ENCODE measurements at regions of chr2 and their contacts with region 1.

Region 1: DNA sequence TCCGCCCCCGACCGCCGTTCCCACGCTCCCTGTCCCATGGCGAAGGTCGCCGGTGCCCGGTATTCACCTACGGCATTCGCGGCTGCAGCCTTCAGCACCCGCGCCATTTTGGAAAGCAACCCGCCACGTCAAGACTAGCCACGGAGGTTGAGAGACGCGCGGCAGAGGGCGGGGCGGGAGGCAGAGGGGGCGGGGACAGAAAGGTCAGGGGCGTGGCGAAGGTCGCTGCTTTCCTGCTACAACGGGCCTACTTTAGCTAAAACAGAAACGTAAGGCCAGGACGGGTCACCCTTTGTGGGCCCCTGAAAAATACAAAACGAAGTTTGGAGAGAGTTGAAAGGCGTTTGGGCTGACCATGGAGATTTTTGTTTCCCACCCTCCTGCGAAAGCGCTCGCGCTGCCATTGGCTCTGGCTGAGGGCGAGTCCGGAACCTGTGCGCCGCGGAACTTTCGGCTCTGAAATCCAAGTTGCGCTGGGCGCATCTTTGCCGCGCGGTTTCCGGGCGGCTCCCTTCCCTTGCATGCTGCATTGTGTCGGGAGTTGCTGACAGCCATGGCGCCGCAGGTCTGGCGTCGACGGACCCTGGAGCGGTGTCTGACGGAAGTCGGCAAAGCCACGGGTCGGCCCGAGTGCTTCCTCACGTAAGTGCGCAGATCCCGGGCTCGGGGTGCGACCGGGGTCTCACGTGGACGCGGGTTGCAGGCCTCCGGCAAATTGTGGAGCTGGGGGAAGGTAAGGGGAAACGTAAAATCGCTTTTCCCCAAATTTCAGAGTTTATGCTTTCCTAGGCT is at the starts of genes MCEE and MPHOSPH10:
- DNase-seq: peak; percentile 95
- ATAC-seq: peak; percentile 95
- H3K4me3 Mint-ChIP-seq: no peak within 1 kb of the TSS
- H3K27ac Mint-ChIP-seq: no peak within 1 kb of the TSS
- H3K4me1 Mint-ChIP-seq: peaks cover 18% of the 10 kb centered on the region
- H3K27me3 Mint-ChIP-seq: no peaks in the 10 kb centered on the region
- total RNA-seq, gene MCEE: 10.2 to 13.6 TPM
- total RNA-seq, gene MPHOSPH10: 48.5 to 61.9 TPM

Region 2: DNA sequence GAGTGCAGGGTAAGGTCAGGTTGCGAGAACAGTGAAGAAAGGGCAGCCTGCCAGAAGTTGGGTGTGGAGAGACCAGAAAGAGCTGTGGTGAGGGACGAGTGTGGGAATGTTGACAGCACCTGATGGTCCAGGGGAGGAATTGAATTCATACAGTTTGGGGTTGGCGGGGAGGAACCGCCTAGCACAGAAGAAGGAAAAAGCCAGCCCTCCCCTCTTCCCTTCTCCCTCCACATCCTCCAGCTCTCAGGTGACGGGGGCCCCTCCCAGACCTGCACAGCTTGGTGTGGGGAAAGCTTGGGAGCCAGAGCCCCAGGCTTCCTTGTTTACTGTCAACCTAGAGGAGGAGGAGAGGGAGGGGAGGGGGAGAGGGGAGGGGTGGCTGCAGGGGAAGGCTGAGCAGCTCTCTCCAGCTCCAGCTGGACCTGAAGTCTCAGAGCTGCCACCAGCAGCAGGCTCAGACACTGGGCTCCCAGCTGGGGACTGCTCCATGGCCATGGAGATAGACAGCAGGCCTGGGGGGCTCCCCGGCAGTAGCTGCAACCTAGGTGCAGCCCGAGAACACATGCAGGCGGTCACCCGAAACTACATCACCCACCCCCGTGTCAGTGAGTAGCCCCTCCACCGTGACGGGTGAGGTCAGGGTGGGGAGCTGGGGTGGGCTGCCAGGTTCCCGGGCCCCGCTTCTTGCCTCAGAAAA is 194.7 kb before region 1 on chr2 and contains the start of gene ATP6V1B1:
- CTCF ChIA-PET with region 1: no interaction called
- POLR2A ChIA-PET with region 1: no interaction called
- intact Hi-C with region 1: no loop called
- DNase-seq: no peak
- ATAC-seq: no peak
- H3K4me3 Mint-ChIP-seq: no peak within 1 kb of the TSS
- H3K27ac Mint-ChIP-seq: no peak within 1 kb of the TSS
- H3K4me1 Mint-ChIP-seq: no peaks in the 10 kb centered on the region
- H3K27me3 Mint-ChIP-seq: peaks cover 11% of the 10 kb centered on the region
- total RNA-seq, gene ATP6V1B1: not detected

Region 3: DNA sequence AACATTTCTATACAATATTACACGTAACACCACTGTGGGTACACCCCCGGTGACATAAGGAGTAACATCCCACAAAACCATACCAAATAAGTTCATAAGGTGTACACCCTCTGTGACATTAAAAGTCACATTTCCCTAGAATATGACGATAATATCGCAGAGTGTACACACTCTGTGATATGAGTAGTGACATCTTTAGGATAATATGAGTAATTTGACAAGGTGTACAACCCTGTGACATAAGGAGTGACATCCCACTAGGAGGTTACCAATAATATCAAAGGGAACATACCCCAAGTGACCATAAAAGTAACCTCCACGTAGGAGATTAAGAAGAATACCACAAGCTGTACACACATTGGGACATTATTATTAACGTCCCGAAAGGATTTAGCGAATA is 111.7 kb before region 1 on chr2:
- CTCF ChIA-PET with region 1: no interaction called
- POLR2A ChIA-PET with region 1: no interaction called
- intact Hi-C with region 1: loop called in 1 of 2 experiments (anchors 2 kb)
- DNase-seq: no peak
- ATAC-seq: peak; percentile 47
- H3K4me3 Mint-ChIP-seq: no peak overlapping the region
- H3K27ac Mint-ChIP-seq: no peak overlapping the region
- H3K4me1 Mint-ChIP-seq: peaks cover 7% of the 10 kb centered on the region
- H3K27me3 Mint-ChIP-seq: peaks cover 2% of the 10 kb centered on the region

Region 4: GRCh38 chr2:71049365-71050360 is 80.6 kb before region 1 on chr2:
- CTCF ChIA-PET with region 1: no interaction called
- POLR2A ChIA-PET with region 1: no interaction called
- intact Hi-C with region 1: loop called in 1 of 2 experiments (anchors 1 kb)
- DNase-seq: peak; percentile 82
- ATAC-seq: peak; percentile 81
- H3K4me3 Mint-ChIP-seq: no peak overlapping the region
- H3K27ac Mint-ChIP-seq: peak overlapping the region; percentile 37
- H3K4me1 Mint-ChIP-seq: peaks cover 13% of the 10 kb centered on the region
- H3K27me3 Mint-ChIP-seq: no peaks in the 10 kb centered on the region

Region 5: DNA sequence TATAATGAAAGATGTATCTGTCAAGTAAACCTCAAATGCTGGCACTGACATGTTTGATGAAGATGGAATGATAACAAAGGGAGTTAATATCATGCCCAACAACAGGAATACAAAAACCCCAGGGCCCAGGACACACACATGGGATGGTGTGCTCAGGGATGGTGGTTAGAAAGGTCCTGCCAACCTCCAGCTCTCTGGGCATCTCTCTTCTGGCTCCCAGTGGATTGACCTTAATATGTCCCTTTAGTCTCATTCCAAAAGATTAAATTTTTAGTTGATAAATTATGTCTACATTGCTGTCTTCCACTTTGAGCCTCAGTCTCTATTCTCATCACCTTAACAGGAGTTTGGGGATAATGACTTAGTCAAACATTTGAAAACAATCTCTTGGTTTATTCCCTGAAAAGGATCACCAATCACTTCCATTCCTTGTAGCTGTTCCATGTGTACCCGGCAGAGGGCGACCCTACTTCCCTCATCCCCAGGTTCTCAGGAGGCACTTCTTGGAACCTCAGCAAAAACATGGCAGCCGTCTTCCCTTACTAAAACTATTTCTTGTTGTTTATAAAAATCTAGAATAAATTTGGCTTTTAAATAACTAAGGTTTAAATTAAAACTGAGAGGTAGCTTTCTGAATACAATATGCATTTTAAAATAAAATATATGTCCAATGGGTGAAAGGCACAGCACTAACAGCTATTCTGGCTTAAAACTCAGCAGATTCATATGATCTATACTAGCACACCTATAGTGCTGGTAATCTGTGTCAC is 29.9 kb before region 1 on chr2:
- CTCF ChIA-PET with region 1: interaction called, 7 read pairs
- POLR2A ChIA-PET with region 1: no interaction called
- intact Hi-C with region 1: loop called in 1 of 2 experiments (anchors 2 kb)
- DNase-seq: peak; percentile 71
- ATAC-seq: peak; percentile 74
- H3K4me3 Mint-ChIP-seq: no peak overlapping the region
- H3K27ac Mint-ChIP-seq: no peak overlapping the region
- H3K4me1 Mint-ChIP-seq: no peaks in the 10 kb centered on the region
- H3K27me3 Mint-ChIP-seq: no peaks in the 10 kb centered on the region

Region 6: DNA sequence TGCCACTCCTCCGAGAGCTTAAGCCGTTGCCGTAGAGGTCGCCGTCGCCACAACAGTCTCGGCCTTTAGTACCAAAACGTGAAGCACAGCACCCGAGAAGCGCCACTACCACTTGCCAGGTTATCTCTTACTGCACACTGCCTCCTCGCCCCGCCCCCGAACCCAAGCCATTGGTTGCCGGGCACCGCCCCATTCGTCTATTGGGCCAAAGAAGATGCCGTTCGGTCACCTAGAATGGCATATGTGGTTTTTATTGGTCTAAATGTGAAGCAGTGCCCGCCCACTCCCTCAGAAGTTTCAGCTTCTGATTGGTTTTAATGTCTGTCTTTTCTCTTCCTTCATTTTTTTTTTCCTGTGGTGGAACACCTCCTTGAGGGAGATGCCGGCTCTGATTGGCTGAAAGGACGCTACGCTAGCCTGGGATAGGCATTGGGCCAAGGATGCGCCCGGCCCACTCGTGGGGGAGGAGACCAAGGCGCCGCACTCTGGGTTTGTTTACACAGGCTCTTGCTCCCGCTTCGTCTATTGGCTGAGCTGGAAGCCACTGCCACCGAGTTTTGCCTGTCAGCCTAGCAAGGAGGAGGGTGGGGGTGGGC is 96.8 kb after region 1 on chr2 and contains the start of gene PAIP2B:
- CTCF ChIA-PET with region 1: no interaction called
- POLR2A ChIA-PET with region 1: interaction called, 3 read pairs
- intact Hi-C with region 1: loop called (anchors 1 to 2 kb)
- DNase-seq: peak; percentile 99
- ATAC-seq: peak; percentile 97
- H3K4me3 Mint-ChIP-seq: peak within 1 kb of the TSS; percentile 94
- H3K27ac Mint-ChIP-seq: peak within 1 kb of the TSS; percentile 85
- H3K4me1 Mint-ChIP-seq: peaks cover 15% of the 10 kb centered on the region
- H3K27me3 Mint-ChIP-seq: peaks cover 5% of the 10 kb centered on the region
- total RNA-seq, gene PAIP2B: 2.3 to 3.0 TPM

Region 7: GRCh38 chr2:71276311-71277146 is 146.2 kb after region 1 on chr2:
- CTCF ChIA-PET with region 1: no interaction called
- POLR2A ChIA-PET with region 1: no interaction called
- intact Hi-C with region 1: loop called (anchors 1 to 2 kb)
- DNase-seq: peak; percentile 94
- ATAC-seq: peak; percentile 100
- H3K4me3 Mint-ChIP-seq: peak overlapping the region; percentile 67
- H3K27ac Mint-ChIP-seq: no peak overlapping the region
- H3K4me1 Mint-ChIP-seq: peaks cover 14% of the 10 kb centered on the region
- H3K27me3 Mint-ChIP-seq: peaks cover 76% of the 10 kb centered on the region

Region 8: DNA sequence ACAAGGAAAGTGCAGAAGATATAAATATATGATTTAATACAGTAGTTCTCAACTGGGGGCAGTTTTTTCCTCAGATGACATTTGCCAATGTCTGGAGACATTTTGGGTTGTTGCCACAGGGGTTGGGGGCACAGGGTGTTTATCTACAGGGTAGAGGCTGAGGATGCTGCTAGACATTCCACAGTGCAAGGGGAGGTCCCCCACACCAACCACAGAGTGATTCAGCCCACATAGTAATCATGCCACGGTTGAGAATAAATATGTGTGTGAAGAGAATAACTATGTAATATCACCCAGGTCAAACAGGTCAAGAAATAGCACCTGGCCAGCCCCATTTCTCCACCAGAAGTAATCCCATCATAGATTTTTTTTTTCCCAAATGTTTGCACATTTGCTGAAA is 341.0 kb after region 1 on chr2:
- CTCF ChIA-PET with region 1: no interaction called
- POLR2A ChIA-PET with region 1: no interaction called
- intact Hi-C with region 1: no loop called
- DNase-seq: peak; percentile 14
- ATAC-seq: peak; percentile 53
- H3K4me3 Mint-ChIP-seq: no peak overlapping the region
- H3K27ac Mint-ChIP-seq: no peak overlapping the region
- H3K4me1 Mint-ChIP-seq: peaks cover 6% of the 10 kb centered on the region
- H3K27me3 Mint-ChIP-seq: peaks cover 29% of the 10 kb centered on the region